Transverse colon (tissue), 4 donors: ENCODE measurements at regions of chr15 and their contacts with region 1.

Region 1: GRCh38 chr15:39472621-39473297 is 108.1 kb upstream of the THBS1 start:
- DNase-seq: peak; percentile 81
- H3K4me3 ChIP-seq: no peak overlapping the region
- H3K27ac ChIP-seq: peak overlapping the region; percentile 82 to 92 (median 85)
- H3K4me1 ChIP-seq: peaks cover 4 to 22% (median 9%) of the 10 kb centered on the region in 4 donors
- H3K27me3 ChIP-seq: no peaks in the 10 kb centered on the region
- CTCF ChIP-seq: no peak
- EP300 ChIP-seq: peak; percentile 97
- POLR2A ChIP-seq: no peak

Region 2: DNA sequence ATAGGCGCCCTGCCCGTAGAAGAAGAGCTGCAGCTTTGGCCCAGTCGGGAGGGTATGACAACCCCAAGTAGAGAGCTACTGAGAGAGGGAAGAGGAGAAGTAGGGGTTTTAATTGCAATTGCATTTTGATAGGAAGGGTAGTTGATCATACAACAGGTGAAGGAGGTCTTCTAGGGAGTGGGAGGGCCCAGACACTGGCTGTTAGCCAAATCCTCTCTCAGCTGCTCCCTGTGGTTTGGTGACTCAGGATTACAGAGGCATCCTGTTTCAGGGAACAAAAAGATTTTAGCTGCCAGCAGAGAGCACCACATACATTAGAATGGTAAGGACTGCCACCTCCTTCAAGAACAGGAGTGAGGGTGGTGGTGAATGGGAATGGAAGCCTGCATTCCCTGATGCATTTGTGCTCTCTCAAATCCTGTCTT is 300.8 kb before region 1 on chr15:
- in situ Hi-C with region 1: loop called in 1 of 4 experiments (anchors 10 kb)
- intact Hi-C with region 1: no loop called
- DNase-seq: peak; percentile 41
- H3K4me3 ChIP-seq: no peak overlapping the region
- H3K27ac ChIP-seq: peak overlapping the region; percentile 66 to 79 (median 70)
- H3K4me1 ChIP-seq: peaks cover 2 to 15% (median 9%) of the 10 kb centered on the region in 4 donors
- H3K27me3 ChIP-seq: no peaks in the 10 kb centered on the region
- CTCF ChIP-seq: peak in 4 of 5 experiments; percentile 12 to 55 (median 32)
- EP300 ChIP-seq: no peak
- POLR2A ChIP-seq: no peak

Region 3: DNA sequence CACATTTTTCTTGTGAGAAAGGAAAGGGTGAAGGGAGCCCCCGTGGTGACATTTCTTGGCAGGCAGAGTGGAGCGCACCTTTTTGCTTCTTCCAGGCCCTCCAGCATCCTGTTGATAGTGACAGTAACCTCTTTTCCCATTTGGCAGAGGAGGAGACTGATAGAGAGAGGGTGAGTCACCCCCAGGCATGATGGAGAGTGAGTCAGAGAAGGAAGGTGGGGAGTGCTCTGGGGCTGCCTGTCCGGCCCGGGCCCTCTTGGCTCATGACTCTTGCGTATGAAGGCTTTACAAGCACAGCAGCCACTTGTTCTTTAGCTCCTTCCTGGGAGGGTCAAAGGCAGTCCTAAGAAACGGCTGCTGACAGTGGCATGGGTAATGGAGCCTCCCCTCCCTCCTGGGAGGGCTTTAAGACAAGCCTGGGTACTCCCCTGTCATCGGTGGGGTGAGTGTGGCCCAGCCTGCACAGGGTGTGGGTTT is 794.1 kb after region 1 on chr15:
- in situ Hi-C with region 1: no loop called
- intact Hi-C with region 1: no loop called
- DNase-seq: peak; percentile 45
- H3K4me3 ChIP-seq: no peak overlapping the region
- H3K27ac ChIP-seq: peak overlapping the region in 2 of 4 donors; percentile 27 to 56
- H3K4me1 ChIP-seq: peaks cover 0 to 21% (median 14%) of the 10 kb centered on the region in 4 donors
- H3K27me3 ChIP-seq: no peaks in the 10 kb centered on the region
- CTCF ChIP-seq: no peak
- EP300 ChIP-seq: no peak
- POLR2A ChIP-seq: no peak